ENCODE measurements at regions of chr3 and their contacts with region 1.

Region 1: GRCh38 chr3:48898383-48899234 is at the start of gene SLC25A20:
- DNase-seq: peak; percentile 95
- H3K4me3 Mint-ChIP-seq: peak within 1 kb of the TSS; percentile 89
- H3K27ac Mint-ChIP-seq: peak within 1 kb of the TSS; percentile 91
- H3K4me1 Mint-ChIP-seq: peaks cover 46% of the 10 kb centered on the region
- H3K27me3 Mint-ChIP-seq: no peaks in the 10 kb centered on the region
- total RNA-seq, gene SLC25A20: 25.6 to 29.5 TPM

Region 2: DNA sequence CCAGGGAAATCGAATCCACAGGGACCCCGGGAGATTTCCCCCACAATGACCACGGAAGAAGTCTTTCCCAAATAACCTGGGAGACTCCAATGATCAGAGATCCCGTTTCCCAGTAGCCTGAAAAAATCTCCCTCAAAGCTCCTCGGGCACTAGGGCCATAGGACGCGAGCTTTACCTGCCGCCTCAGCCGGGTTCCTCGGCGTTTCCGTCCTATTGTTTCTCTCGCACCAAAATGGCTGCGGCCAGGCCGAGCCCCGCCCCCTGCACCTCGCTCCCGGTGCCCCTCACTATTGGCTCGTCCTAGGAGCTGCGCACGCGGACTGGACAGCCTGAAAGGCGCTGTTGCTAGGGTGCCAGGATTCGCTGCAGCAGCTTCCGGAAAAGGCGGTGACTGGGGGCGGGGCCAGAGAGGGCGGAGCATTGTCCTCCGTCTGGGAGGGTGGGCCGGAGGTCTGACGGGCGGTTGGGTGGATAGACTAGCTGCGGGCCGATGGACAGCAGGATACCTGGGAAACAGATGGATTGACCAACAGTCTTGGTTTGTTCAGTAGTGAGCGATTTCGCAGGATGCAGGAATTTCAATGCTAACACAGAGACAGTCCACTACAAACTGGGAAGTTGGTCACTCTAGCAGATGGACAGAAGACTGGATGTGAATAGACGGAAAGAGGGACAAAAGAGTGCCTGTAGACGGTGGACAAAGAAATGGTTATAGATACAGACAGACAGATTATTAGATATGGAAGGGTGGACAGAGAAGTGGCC is 181.4 kb before region 1 on chr3 and contains the start of gene IP6K2:
- CTCF ChIA-PET with region 1: no interaction called
- POLR2A ChIA-PET with region 1: interaction called, 23 read pairs
- DNase-seq: peak; percentile 99
- H3K4me3 Mint-ChIP-seq: peak within 1 kb of the TSS; percentile 100
- H3K27ac Mint-ChIP-seq: peak within 1 kb of the TSS; percentile 96
- H3K4me1 Mint-ChIP-seq: peaks cover 44% of the 10 kb centered on the region
- H3K27me3 Mint-ChIP-seq: peaks cover 19% of the 10 kb centered on the region
- total RNA-seq, gene IP6K2: 52.7 to 57.8 TPM

Region 3: DNA sequence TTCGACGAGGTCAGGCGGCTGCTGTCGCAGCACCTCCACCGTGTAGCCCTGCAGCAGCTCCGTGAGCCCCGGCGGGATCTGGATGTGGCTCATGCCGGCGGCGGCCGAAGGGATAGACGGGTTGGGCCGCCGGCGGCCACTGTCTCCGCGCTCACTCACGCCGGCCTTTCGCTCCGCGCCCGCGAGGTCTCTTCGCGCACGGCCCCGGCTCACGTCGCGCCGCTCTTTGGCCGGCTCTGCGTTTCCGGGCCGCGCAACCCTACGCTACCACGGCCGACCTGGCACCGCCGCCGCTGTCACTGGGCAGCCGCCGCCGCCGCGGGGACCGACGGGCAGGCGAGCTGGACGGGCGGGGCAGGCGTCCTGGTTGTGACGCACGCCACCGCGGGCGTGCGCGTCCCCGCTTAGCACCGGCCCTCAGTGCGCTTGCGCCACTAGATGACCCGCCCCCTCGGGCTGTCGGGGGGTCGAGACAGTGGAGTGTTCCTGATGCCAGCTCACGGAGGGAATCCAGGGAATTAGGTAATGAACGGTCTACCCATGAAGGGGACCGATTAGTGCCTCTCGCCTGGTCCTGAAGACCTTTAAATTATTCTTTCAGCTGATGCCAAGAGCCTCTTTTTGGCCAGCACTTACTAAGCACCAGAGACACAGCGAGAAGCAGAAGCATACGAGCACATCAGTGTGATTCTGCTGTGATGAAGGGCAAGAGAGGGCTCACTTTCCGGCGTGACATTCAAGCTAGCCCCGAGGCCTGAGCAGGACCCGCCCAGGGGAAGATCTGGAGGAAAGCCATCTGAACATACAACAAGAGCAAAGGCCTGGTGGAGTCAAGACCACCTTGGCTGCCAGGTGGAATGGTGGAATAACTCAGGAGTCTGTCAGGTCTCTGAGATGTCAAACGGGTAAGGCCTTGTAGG is 50.8 kb before region 1 on chr3 and contains the start of gene PRKAR2A:
- CTCF ChIA-PET with region 1: no interaction called
- POLR2A ChIA-PET with region 1: interaction called, 13 read pairs
- DNase-seq: peak; percentile 83
- H3K4me3 Mint-ChIP-seq: peak within 1 kb of the TSS; percentile 81
- H3K27ac Mint-ChIP-seq: peak within 1 kb of the TSS; percentile 83
- H3K4me1 Mint-ChIP-seq: peaks cover 26% of the 10 kb centered on the region
- H3K27me3 Mint-ChIP-seq: no peaks in the 10 kb centered on the region
- total RNA-seq, gene PRKAR2A: 28.3 to 29.7 TPM

Region 4: GRCh38 chr3:48926425-48927392 is 28.1 kb after region 1 on chr3:
- CTCF ChIA-PET with region 1: interaction called, 11 read pairs
- POLR2A ChIA-PET with region 1: interaction called, 10 read pairs
- DNase-seq: no peak
- H3K4me3 Mint-ChIP-seq: no peak overlapping the region
- H3K27ac Mint-ChIP-seq: peak overlapping the region; percentile 66
- H3K4me1 Mint-ChIP-seq: peaks cover 67% of the 10 kb centered on the region
- H3K27me3 Mint-ChIP-seq: no peaks in the 10 kb centered on the region

Measured in activated CD4-positive, alpha-beta memory T cell treated with anti-CD3 and anti-CD28 coated beads, Interleukin-2, amount 10 ng/mL, durations not matched to agents 7 days and 5 days (primary cell).